Caco-2 (cell line): ENCODE measurements at regions of chr2 and their contacts with region 1.

Region 1: GRCh38 chr2:32553829-32554432 is 73.9 kb upstream of the TTC27 start:
- DNase-seq: peak in 1 of 2 experiments; percentile 35
- H3K4me3 ChIP-seq: no peak overlapping the region
- H3K4me3 Mint-ChIP-seq: no peak overlapping the region
- H3K27ac Mint-ChIP-seq: no peak overlapping the region
- H3K4me1 ChIP-seq: no peaks in the 10 kb centered on the region
- H3K4me1 Mint-ChIP-seq: no peaks in the 10 kb centered on the region
- H3K27me3 ChIP-seq: no peaks in the 10 kb centered on the region
- H3K27me3 Mint-ChIP-seq: no peaks in the 10 kb centered on the region
- CTCF ChIP-seq: peak; percentile 62 to 88

Region 2: DNA sequence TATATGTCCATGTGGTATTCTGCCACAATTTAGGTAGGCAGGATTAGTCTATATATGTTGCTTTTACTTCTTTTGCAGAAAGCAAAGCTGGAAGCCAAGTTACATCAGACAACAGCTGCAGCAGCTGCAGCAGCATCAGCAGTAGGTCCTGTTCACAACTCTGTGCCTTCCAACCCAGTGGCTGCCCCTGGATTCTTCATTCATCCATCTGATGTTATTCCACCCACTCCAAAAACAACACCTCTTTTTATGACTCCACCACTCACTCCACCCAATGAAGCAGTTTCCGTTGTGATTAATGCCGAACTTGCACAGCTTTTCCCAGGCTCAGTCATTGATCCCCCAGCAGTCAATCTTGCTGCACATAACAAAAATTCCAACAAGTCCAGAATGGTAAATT is 89.5 kb before region 1 on chr2:
- CTCF ChIA-PET with region 1: no interaction called
- POLR2A ChIA-PET with region 1: no interaction called
- intact Hi-C with region 1: no loop called
- DNase-seq: no peak
- H3K4me3 ChIP-seq: no peak overlapping the region
- H3K4me3 Mint-ChIP-seq: no peak overlapping the region
- H3K27ac Mint-ChIP-seq: no peak overlapping the region
- H3K4me1 ChIP-seq: no peaks in the 10 kb centered on the region
- H3K4me1 Mint-ChIP-seq: no peaks in the 10 kb centered on the region
- H3K27me3 ChIP-seq: no peaks in the 10 kb centered on the region
- H3K27me3 Mint-ChIP-seq: no peaks in the 10 kb centered on the region
- CTCF ChIP-seq: no peak

Region 3: DNA sequence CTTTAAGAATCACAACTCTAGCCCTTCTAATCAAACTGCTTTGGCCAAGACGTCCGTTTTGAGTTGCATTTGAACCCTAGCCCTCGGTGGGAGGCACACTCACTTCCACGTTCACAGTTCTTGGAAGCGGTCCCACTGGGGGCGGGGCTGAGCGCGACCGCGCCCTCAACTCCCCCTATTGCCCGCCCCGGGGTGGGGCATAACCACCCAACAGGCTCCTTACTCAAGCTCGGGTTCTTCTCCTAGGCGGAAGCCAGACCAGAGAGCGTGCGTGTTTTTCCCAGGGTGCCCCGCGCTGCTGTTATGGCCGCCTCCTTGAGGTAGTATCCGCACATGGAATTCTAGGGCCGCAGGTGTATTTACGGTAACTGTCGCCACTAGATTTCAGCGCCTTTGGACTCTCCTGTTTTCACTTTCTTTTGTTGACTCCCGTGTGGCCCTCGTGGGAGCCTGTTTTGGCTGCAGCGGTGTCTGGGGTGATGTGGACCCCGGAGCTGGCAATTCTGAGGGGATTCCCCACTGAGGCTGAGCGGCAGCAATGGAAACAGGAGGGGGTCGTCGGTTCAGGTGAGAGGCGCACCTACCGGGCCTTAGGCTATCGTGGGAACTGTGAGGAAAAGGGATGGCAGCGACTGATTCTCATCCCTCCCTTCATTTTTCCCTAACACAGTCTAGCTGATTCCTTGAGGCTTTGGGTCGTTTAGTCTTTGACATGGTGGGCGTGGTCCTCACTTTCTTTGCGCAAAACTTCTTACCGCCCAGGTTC is 74.1 kb after region 1 on chr2 and contains the start of gene TTC27:
- CTCF ChIA-PET with region 1: no interaction called
- POLR2A ChIA-PET with region 1: no interaction called
- intact Hi-C with region 1: loop called (anchors 2 kb)
- DNase-seq: peak; percentile 97
- H3K4me3 ChIP-seq: peak within 1 kb of the TSS; percentile 81
- H3K4me3 Mint-ChIP-seq: peak within 1 kb of the TSS; percentile 91
- H3K27ac Mint-ChIP-seq: peak within 1 kb of the TSS; percentile 92
- H3K4me1 ChIP-seq: no peaks in the 10 kb centered on the region; the same call in 1 of the 2 replicates
- H3K4me1 Mint-ChIP-seq: peaks cover 9% of the 10 kb centered on the region
- H3K27me3 ChIP-seq: no peaks in the 10 kb centered on the region
- H3K27me3 Mint-ChIP-seq: no peaks in the 10 kb centered on the region
- CTCF ChIP-seq: peak in 1 of 2 experiments; percentile 9
- total RNA-seq, gene TTC27: 18.9 and 20.6 TPM in 2 replicates

Region 4: DNA sequence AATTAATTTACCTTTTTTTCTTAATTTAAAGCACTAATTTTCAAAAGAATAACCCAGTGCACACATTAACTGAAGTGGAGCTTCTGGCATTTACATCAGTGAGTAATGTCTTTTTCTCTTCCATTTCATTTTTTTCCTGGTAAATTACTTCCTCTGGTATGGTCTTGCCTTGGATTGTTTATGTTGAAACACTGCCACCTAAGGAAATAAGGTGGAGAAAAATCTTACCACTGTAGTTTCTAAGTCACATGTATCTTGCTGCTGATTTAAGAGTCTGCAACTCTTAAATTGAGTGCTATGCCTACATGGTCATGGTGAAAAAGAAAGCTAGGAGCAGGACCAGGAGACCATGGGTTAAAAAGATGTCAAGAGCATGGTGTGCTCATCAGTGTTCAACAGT is 124.9 kb after region 1 on chr2:
- CTCF ChIA-PET with region 1: no interaction called
- POLR2A ChIA-PET with region 1: no interaction called
- intact Hi-C with region 1: loop called (anchors 2 kb)
- DNase-seq: no peak
- H3K4me3 ChIP-seq: no peak overlapping the region
- H3K4me3 Mint-ChIP-seq: no peak overlapping the region
- H3K27ac Mint-ChIP-seq: no peak overlapping the region
- H3K4me1 ChIP-seq: no peaks in the 10 kb centered on the region
- H3K4me1 Mint-ChIP-seq: peaks cover 7% of the 10 kb centered on the region
- H3K27me3 ChIP-seq: no peaks in the 10 kb centered on the region
- H3K27me3 Mint-ChIP-seq: no peaks in the 10 kb centered on the region
- CTCF ChIP-seq: peak in 1 of 2 experiments; percentile 5

Region 5: GRCh38 chr2:33380001-33380609 is 826.2 kb after region 1 on chr2:
- CTCF ChIA-PET with region 1: no interaction called
- POLR2A ChIA-PET with region 1: no interaction called
- intact Hi-C with region 1: loop called (anchors 10 kb)
- DNase-seq: peak in 1 of 2 experiments; percentile 23
- H3K4me3 ChIP-seq: no peak overlapping the region
- H3K4me3 Mint-ChIP-seq: no peak overlapping the region
- H3K27ac Mint-ChIP-seq: no peak overlapping the region
- H3K4me1 ChIP-seq: no peaks in the 10 kb centered on the region
- H3K4me1 Mint-ChIP-seq: no peaks in the 10 kb centered on the region
- H3K27me3 ChIP-seq: no peaks in the 10 kb centered on the region
- H3K27me3 Mint-ChIP-seq: no peaks in the 10 kb centered on the region
- CTCF ChIP-seq: peak; percentile 50 to 79